Activated T-helper 2 cell treated with anti-CD3 and anti-CD28 coated beads, Interferon-gamma antibody, Interleukin-2, Interleukin-4, amounts not matched to agents 10 μg/mL and 5 μg/mL and 100 μg/mL, durations not matched to agents 14 hours and 24 hours and 36 hours (primary cell): ENCODE measurements at regions of chr19 and their contacts with region 1.

Region 1: DNA sequence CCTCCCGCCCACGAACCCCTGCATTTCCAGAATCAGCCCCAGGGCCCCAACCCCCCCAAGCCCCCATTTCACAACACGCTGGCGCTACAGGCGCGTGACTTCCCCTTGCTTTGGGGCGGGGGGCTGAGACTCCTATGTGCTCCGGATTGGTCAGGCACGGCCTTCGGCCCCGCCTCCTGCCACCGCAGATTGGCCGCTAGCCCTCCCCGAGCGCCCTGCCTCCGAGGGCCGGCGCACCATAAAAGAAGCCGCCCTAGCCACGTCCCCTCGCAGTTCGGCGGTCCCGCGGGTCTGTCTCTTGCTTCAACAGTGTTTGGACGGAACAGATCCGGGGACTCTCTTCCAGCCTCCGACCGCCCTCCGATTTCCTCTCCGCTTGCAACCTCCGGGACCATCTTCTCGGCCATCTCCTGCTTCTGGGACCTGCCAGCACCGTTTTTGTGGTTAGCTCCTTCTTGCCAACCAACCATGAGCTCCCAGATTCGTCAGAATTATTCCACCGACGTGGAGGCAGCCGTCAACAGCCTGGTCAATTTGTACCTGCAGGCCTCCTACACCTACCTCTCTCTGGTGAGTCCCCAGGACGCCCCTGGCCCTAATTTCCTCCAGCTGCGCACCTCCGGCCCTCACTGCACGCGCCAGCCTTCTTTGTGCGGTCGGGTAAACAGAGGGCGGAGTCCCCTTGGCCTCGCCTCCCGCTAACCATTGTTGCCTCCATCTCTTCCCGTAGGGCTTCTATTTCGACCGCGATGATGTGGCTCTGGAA is at the start of gene FTL:
- DNase-seq: peak; percentile 89
- H3K4me3 Mint-ChIP-seq: peak within 1 kb of the TSS; percentile 96
- H3K27ac Mint-ChIP-seq: peak within 1 kb of the TSS; percentile 99
- H3K4me1 Mint-ChIP-seq: peaks cover 43% of the 10 kb centered on the region
- H3K27me3 Mint-ChIP-seq: no peaks in the 10 kb centered on the region
- total RNA-seq, gene FTL: 646 and 658 TPM in 2 replicates

Region 2: GRCh38 chr19:48772503-48772953 is 192.7 kb before region 1 on chr19:
- intact Hi-C with region 1: no loop called
- DNase-seq: no peak
- H3K4me3 Mint-ChIP-seq: no peak overlapping the region
- H3K27ac Mint-ChIP-seq: no peak overlapping the region
- H3K4me1 Mint-ChIP-seq: no peaks in the 10 kb centered on the region
- H3K27me3 Mint-ChIP-seq: peaks cover 12% of the 10 kb centered on the region

Region 3: DNA sequence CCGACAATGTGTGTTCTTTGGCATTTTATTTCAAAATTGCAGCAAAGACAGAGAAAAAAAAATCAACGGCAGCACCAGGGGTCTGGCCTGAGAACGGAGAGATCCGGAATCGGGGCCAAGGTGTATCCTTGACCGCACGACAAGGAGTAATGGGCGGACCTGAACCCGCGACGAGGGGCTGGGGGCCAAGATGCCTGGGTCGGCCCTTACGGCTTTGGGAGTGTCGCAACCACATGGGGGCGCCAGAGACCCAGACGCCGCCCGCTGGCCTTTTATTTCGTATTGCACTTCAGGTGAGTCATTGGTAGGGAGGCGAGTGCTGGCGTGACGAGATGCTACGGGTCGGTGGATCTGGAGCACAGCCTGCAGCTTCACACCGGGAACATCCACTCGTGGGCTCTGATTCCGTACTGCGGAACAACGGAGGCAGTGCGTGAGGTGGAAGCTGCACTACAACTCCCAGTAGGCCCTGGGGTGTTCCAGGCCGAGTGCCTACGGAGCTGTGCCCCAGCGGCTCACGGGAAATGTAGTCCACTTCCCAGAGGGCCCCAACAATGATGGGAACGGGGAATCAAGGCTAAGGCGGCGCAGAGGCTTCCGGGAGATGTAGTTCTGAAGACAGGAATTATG is 170.1 kb before region 1 on chr19:
- intact Hi-C with region 1: loop called (anchors 2 kb)
- DNase-seq: peak; percentile 78
- H3K4me3 Mint-ChIP-seq: peak overlapping the region; percentile 86
- H3K27ac Mint-ChIP-seq: peak overlapping the region; percentile 85
- H3K4me1 Mint-ChIP-seq: peaks cover 5% of the 10 kb centered on the region
- H3K27me3 Mint-ChIP-seq: no peaks in the 10 kb centered on the region

Region 4: GRCh38 chr19:48872182-48872883 is 92.9 kb before region 1 on chr19 and contains the start of gene PPP1R15A:
- intact Hi-C with region 1: loop called (anchors 1 kb)
- DNase-seq: peak; percentile 98
- H3K4me3 Mint-ChIP-seq: peak within 1 kb of the TSS; percentile 94
- H3K27ac Mint-ChIP-seq: peak within 1 kb of the TSS; percentile 99
- H3K4me1 Mint-ChIP-seq: peaks cover 40% of the 10 kb centered on the region
- H3K27me3 Mint-ChIP-seq: peaks cover 4% of the 10 kb centered on the region
- total RNA-seq, gene PPP1R15A: 30.8 and 31.8 TPM in 2 replicates

Region 5: DNA sequence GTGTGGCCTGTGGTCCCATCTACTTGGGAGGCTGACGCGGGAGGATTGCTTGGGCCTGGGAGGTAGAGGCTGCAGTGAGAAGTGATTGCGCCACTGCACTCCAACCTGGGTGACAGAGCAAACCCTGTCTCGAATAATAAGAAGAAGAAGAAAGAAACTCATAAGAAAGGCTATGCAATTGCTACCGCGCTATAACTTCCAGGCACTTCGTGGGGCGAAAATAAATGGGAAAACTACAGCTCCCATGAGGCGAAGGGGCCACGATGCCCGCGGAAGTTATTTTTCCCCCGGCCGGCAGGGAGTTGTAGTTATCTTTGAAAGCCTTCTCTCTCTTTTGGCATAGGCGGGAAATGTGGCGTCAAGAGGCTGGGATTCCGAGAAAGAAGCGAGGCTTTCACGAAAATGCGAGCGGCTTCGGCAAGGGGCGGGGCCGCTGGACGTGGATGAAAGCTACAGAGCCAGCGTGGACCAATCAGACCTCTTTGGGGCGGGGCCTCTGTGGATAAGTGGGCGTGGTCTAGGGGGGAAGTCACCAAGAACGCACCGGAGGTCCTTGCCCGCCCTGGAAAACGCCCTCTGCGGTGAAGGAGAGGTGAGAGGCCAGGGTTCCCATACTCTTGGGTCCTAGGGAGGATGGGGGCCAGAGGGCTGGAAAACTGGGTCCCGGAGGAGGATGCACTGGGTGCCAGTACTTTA is 65.3 kb before region 1 on chr19 and contains the start of gene NUCB1:
- intact Hi-C with region 1: loop called (anchors 2 kb)
- DNase-seq: peak; percentile 99
- H3K4me3 Mint-ChIP-seq: peak within 1 kb of the TSS; percentile 97
- H3K27ac Mint-ChIP-seq: peak within 1 kb of the TSS; percentile 97
- H3K4me1 Mint-ChIP-seq: peaks cover 18% of the 10 kb centered on the region
- H3K27me3 Mint-ChIP-seq: peaks cover 2% of the 10 kb centered on the region
- total RNA-seq, gene NUCB1: 142 and 147 TPM in 2 replicates

Region 6: GRCh38 chr19:48954595-48955310 is 10.5 kb before region 1 on chr19 and contains the start of gene BAX:
- intact Hi-C with region 1: loop called (anchors 1 kb)
- DNase-seq: peak; percentile 92
- H3K4me3 Mint-ChIP-seq: peak within 1 kb of the TSS; percentile 89
- H3K27ac Mint-ChIP-seq: peak within 1 kb of the TSS; percentile 84
- H3K4me1 Mint-ChIP-seq: peaks cover 24% of the 10 kb centered on the region
- H3K27me3 Mint-ChIP-seq: no peaks in the 10 kb centered on the region
- total RNA-seq, gene BAX: 232 and 242 TPM in 2 replicates

Region 7: DNA sequence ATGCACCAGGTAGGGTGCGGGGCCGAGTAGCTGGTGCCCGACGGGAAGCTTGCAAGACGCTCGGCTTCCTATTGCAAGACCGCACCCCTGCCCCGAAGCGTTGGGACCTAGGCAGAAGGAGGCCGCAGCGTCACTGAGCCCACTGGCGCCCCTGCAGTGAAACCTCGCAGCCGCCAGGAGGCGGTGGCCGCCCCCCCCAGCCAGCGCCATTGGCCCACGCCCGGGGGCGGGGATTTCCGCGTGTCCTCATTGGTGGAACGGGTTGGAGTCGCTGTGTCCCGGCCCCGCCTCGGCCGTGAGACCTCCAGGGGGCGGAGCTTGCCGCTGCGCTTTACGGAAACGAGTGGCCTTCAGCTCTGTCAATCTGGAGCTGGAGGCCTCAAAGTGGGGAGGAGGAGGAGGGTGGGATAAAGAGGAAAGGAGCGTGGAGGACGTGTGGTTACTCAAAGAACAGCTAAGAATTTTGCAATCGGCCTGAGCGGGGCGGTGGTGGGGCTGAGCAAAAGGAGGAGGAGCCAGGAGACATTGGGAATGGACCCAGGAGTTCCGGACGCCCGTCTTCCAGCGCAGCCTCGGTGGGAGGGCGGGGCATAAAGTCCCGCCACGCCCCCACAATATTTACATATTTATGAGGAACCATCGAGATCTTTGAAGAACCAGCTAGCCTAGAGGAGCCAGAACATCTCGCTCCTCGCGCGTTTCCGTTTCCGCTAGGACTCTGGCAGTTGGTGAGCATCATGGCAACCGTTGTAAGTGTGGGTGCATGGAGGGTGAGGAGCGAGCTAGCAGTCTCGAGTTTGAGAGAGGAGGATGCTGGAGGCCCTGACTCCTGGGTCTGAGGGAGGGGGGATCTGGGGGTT is 28.2 kb after region 1 on chr19 and contains the starts of genes GYS1 and RUVBL2:
- intact Hi-C with region 1: loop called (anchors 1 kb)
- DNase-seq: peak; percentile 99
- H3K4me3 Mint-ChIP-seq: peak within 1 kb of the TSS; percentile 94
- H3K27ac Mint-ChIP-seq: peak within 1 kb of the TSS; percentile 98
- H3K4me1 Mint-ChIP-seq: peaks cover 30% of the 10 kb centered on the region
- H3K27me3 Mint-ChIP-seq: no peaks in the 10 kb centered on the region
- total RNA-seq, gene GYS1: 68.5 and 70.3 TPM in 2 replicates
- total RNA-seq, gene RUVBL2: 160 and 170 TPM in 2 replicates